ENCODE measurements at regions of chr5 and their contacts with region 1.

Region 1: DNA sequence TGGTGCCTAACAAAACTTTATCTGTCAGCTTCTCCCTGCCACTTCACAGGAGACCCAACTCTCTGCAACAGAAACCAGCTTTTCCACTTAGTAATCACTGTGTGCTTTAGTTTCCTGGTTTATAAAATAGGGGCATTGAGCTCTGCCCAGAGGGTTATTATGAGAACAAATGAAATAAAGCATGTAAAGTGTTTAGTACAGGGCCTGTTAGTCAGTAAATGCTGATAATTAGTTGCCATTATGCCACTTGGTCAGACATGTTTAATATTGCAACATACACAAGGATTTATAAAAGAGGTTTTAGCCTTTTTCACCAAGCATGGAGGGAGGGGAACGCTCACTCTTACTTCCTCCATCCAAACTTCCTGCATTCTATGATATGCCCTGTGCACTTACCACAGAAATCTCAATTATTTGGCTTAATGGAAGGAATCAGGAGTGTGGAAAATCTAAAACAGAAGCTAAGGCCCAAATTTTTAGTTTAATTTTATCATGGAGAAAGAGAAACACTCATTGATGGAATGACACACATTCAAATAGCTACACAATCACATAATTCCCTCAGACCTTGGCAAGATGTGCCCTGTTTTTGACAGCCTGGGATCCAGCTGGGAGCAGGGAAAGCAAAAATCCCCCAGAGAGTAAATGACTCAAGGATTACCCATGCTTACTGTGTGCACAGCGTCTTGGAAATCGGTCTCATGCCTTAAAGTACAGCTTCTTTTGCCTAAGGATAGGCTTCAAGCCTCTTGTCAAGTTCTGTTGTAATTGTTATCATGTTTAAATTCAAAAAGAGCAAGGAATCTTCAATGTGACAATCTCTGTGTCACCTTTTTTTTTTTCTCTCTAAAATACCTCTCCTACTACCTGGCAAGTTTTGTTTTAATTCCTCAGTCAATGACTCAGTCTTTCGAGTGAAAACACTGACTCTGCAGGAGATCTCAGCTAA is 34.0 kb downstream of the ZNF474 start:
- DNase-seq: peak; percentile 88
- H3K4me3 ChIP-seq: no peak overlapping the region
- CTCF ChIP-seq: no peak

Region 2: DNA sequence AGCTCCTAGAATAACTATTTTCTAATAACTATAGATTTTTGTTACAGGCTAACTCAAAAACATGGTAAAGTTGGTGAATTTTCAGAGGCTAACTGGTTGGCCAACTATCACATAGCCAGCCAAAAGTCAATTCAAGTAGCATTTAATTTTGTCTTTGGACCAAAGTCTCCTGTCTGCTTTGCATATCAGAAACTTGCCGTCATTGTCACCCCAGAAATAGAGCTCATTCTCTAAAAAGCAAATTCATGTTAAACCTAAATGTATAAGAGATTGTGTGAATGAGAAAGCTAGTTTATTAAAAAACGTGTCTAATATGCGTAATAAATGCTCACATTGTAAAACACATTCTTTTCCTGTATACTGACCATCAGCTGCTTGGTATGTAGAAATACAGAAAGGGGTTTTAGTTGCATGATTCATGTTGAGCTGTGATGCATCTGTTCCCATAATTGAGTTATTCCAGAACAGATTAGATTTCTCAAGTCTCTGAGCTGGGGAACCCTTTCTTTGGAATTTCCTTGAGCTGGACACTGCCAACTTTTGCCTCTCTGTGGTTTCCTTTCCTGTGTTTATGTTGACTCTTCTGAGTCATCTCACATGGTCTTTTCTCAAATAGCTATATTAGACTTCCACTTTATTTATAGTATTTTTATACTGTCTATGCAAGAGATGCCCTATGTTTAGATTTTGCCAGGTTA is 194.3 kb before region 1 on chr5:
- CTCF ChIA-PET with region 1: interaction called, 56 read pairs
- POLR2A ChIA-PET with region 1: interaction called, 11 read pairs
- DNase-seq: peak; percentile 97
- H3K4me3 ChIP-seq: no peak overlapping the region
- CTCF ChIP-seq: no peak

Region 3: DNA sequence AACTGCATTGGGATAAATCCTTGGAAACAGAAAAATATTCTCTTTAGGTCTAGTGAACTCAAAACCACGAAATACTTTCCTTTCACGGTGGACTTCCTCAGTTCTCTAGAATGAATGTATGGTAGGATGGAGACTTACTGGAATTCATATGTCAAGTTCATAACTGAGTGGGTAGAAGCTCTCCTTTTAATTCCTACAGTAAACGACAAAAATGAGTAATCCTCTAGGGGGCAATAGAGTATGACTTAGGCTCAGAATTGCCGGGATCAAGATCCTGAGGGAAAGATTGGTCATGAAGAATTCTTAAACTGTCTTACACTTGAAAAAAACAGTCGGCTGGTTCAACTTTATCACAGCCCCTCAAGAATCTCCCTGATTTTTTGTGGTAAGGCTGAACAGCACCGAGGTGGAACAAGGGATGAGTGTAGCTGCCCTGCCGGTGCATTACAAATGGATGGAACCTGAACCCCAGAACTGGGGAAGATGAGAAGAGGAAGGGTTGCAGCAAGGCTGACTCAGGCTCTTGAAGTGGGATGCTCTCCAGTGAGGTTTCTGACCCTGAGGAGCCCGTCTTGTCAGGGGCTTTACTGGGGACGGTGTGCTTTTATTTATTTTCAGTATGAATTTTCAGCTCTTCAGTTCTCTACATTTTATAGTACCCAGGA is 71.3 kb before region 1 on chr5:
- CTCF ChIA-PET with region 1: interaction called, 166 read pairs
- POLR2A ChIA-PET with region 1: interaction called, 10 read pairs
- DNase-seq: peak; percentile 77
- H3K4me3 ChIP-seq: peak overlapping the region; percentile 19
- CTCF ChIP-seq: peak; percentile 21

Region 4: DNA sequence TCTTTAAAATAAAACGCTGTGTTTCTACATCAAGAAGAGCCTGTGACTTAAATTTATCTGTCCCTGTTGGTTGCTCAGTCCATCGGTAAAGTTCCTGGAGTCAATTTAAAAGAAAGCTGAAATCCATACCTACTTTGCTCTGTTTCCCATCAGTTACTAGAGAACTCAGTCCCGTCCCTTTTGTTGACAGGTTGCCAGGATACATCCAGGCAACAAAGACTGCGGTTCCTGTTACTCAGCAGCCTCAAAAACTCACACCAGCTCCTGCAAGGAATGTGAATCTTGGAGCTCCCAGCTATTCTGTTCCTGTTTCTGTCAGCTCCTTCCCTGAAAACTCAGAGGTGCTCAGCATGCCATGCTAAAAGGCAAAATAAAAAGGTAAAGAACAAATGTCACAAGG is 34.1 kb before region 1 on chr5 and contains the start of gene ZNF474:
- CTCF ChIA-PET with region 1: interaction called, 9 read pairs
- POLR2A ChIA-PET with region 1: interaction called, 10 read pairs
- DNase-seq: peak; percentile 94
- H3K4me3 ChIP-seq: no peak within 1 kb of the TSS
- CTCF ChIP-seq: no peak

Region 5: DNA sequence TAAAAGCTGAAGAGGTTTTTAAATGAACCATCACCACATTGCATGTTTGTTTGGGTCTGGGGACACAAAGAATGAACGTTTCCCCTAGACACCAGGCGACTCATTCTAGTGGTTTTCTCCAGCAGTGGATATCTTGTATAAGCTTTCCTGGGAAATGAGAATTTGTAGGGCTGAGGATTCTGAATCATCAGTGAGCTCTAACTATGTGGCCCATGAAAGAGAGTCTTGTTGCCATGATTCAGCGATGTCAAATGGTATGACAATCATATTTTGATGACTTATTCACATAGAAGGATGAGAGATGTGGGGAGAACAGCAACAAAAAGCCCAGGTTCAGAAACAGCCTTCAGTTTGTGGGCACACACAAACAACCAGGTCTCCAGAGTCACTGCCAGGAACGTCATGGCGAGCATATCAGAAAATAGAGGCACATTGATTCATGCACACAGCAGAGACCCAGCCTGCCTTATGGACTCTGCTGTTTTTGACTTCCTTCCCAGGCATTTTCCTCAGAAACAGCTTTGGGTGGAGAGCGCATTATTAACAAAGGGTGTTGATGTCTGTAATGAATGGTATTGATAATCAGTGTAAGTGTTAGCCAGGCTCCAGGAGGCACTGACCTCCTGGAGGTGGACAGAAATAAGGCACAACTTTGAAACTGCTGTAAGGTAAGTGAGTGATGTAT is 20.8 kb before region 1 on chr5:
- CTCF ChIA-PET with region 1: interaction called, 81 read pairs
- POLR2A ChIA-PET with region 1: interaction called, 12 read pairs
- DNase-seq: no peak
- H3K4me3 ChIP-seq: no peak overlapping the region
- CTCF ChIP-seq: no peak

Region 6: GRCh38 chr5:122182491-122182921 is 19.1 kb after region 1 on chr5:
- CTCF ChIA-PET with region 1: interaction called, 4 read pairs
- POLR2A ChIA-PET with region 1: interaction called, 15 read pairs
- DNase-seq: no peak
- H3K4me3 ChIP-seq: peak overlapping the region; percentile 18; the same call in 1 of the 2 replicates
- CTCF ChIP-seq: no peak

Region 7: DNA sequence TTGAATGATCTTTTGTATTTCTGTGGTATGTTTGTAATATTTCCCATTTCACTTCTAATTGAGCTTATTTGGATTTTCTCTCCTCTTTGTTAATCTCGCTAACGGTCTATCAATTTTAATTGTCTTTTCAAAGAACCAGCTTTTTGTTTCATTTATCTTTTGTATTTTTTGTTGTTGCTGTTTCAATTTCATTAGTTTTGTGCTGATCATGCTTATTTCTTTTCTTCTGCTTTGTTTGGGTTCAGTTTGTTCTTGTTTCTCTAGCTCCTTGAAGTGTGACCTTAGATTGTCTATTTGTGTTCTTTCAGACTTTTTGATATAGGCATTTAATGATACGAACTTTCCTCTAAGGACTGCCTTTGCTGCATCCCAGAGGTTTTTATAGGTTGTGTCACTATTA is 120.2 kb after region 1 on chr5:
- CTCF ChIA-PET with region 1: no interaction called
- POLR2A ChIA-PET with region 1: no interaction called
- DNase-seq: no peak
- H3K4me3 ChIP-seq: no peak overlapping the region
- CTCF ChIP-seq: no peak

Region 8: DNA sequence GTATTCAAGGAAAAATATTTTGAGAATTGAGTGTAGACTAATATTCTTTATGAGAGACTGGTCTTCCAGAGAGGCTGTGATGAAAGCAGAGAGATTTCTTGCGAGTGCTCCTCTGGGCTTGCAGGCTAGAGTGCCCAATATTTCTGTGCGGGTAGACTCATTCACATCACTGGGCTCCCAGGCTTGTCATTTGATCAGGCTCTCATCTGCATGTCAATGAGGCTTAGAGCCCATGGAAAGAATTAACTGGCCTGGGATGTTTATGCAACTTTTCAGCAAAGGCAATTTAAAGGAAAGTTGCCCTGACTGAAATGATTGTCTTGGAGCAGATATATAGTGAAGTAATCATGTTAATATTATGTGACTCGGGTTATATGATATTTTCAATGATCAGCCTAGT is 190.9 kb after region 1 on chr5:
- CTCF ChIA-PET with region 1: no interaction called
- POLR2A ChIA-PET with region 1: no interaction called
- DNase-seq: no peak
- H3K4me3 ChIP-seq: no peak overlapping the region
- CTCF ChIP-seq: no peak

Region 9: DNA sequence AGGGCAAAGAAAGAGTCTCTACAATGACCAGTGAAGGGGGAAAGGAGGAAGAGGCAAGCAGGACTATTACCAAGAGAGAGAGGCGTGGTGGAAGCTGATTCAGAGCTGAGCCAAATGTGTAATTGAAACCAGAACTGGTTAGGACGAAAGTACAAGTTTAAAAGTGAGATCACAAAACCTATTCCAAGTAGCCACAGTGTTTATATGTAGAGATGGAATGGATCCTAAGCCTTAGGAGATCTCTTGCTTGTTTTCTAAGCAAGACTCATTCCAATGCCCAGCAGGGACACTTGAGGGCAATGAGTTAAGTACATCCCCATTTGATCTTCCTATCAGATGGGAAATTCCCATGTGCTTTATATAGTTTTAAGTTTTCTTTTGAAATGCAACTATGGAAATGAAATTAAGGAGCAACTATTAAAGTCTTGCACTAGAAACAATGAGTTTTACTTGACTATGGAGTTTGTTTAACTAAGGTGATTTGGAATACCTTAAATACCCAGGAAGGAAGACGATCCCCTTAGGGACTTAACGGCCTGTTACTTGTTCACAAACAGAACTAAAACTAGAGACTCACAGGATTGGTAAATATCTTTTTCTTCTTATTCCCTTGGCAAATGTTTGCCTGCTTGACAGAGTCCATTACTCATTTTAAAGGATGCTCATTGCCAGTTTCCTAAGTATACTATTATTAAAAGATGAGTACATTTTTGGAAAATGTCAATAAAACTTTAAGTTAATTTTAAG is 560.4 kb after region 1 on chr5:
- CTCF ChIA-PET with region 1: no interaction called
- POLR2A ChIA-PET with region 1: no interaction called
- DNase-seq: peak; percentile 52
- H3K4me3 ChIP-seq: no peak overlapping the region
- CTCF ChIP-seq: no peak